Calu3 (cell line): ENCODE measurements at regions of chr2 and their contacts with region 1.

Region 1: DNA sequence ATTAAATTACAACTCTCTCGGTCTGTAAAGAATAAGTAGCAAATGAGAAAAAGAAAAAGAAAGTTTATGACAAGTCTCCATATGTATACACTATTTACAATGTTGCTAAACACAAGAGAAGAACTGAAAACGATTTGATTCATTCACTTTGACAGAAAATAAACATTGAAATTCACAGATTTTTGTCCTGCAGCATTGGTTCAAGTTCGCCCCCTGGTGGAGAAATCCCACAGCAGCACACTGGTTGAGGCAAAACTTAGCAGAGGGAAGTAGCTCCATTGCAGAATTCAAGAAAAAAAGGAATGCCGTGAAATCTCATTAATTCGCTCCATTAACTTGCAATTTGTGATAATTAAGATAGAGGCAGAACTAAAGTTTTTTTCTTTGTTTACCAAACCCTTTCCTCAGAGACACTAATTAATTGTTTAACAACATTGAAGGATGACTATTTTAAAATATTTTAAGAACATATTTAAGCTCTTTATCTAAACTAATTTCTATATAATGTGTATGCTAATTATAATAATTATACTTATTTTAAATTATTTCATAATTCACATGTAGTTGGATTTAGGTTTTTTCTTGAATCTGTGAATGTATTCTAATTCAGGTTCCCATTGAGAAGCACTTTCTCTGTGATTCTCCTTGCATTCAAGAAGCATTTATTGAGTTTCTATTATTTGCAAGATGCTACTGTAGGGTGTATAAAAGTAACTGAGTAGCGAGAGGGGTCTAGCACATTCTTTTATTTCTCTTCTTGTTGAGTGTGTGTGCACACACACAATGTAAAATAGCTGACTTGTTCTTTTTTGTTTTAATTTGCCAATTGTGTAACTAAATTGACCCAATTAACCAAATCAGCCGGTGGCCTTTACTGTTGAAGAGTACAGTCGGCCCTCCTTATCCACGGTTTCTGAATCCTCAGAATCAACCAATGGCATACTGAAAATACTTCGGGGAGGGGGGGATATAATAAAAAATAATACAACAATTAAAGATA is 74.1 kb downstream of the COL4A3 start:
- DNase-seq: peak; percentile 81
- H3K4me3 Mint-ChIP-seq: no peak overlapping the region
- H3K27ac Mint-ChIP-seq: no peak overlapping the region
- H3K4me1 Mint-ChIP-seq: no peaks in the 10 kb centered on the region
- H3K27me3 Mint-ChIP-seq: no peaks in the 10 kb centered on the region
- CTCF ChIP-seq: peak; percentile 84

Region 2: GRCh38 chr2:226835796-226836547 is 402.6 kb before region 1 on chr2 and contains the start of gene RHBDD1:
- CTCF ChIA-PET with region 1: no interaction called
- intact Hi-C with region 1: no loop called
- DNase-seq: peak; percentile 95
- H3K4me3 Mint-ChIP-seq: peak within 1 kb of the TSS; percentile 98
- H3K27ac Mint-ChIP-seq: peak within 1 kb of the TSS; percentile 98
- H3K4me1 Mint-ChIP-seq: peaks cover 18% of the 10 kb centered on the region
- H3K27me3 Mint-ChIP-seq: no peaks in the 10 kb centered on the region
- CTCF ChIP-seq: no peak
- total RNA-seq, gene RHBDD1: 28.7 and 32.8 TPM in 2 replicates

Region 3: DNA sequence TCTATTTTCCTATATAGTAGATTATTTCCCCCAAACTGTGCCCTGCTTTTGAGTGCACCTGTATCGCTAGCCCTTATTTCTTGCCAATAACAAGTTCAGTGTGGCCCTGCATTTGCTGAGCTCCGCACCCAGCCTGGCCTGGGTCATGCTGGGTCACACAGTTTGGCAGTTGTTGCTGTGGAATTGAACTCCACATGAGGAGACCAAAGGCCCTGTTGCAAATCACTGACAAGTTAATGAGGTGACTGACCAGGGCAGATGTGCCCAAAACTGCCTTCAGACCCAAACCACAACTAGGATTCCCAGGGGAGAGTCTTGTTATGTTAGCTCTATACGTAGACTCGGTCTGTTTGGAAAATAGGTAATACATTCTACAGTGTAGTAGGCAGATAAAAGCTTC is 105.6 kb before region 1 on chr2:
- CTCF ChIA-PET with region 1: interaction called, 26 read pairs
- intact Hi-C with region 1: loop called (anchors 1 kb)
- DNase-seq: no peak
- H3K4me3 Mint-ChIP-seq: no peak overlapping the region
- H3K27ac Mint-ChIP-seq: no peak overlapping the region
- H3K4me1 Mint-ChIP-seq: no peaks in the 10 kb centered on the region
- H3K27me3 Mint-ChIP-seq: no peaks in the 10 kb centered on the region
- CTCF ChIP-seq: no peak